HEK293 (cell line): ENCODE measurements at regions of chr7 and their contacts with region 1.

Region 1: GRCh38 chr7:150417863-150418262 is 32.6 kb upstream of the GIMAP8 start:
- H3K4me3 ChIP-seq: no peak overlapping the region
- H3K27ac ChIP-seq: no peak overlapping the region
- H3K4me1 ChIP-seq: no peaks in the 10 kb centered on the region
- CTCF ChIP-seq: no peak

Region 2: DNA sequence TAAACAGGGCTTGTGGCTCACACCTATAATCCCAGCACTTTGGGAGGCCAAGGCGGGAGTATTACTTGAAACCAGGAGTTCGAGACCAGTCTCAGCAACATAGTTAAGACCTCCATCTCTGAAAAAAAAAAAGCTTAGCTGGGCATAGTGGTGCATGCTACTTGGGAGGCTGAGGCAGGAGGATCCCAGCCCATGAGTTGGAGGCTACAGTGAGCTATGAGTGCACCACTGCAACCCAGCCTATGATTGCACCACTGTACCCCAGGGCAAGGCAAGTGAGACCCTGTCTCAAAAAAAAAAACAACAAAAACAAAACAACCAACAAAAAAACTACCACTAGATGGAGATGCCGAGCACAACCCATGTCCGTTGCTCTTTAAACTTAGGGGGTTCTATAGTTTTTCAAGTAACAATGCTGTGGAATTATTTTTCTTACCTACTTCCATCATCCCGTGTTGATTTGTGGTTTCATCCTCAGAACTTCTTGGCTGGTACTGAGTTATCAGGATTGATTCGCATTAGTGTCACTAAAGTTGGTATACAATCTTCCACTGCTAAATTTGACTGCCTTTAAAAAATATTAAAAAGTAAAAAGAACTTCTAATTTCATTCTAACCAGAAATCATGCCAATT is 61.5 kb before region 1 on chr7:
- CTCF ChIA-PET with region 1: interaction called, 10 read pairs
- POLR2A ChIA-PET with region 1: no interaction called
- H3K4me3 ChIP-seq: no peak overlapping the region
- H3K27ac ChIP-seq: no peak overlapping the region
- H3K4me1 ChIP-seq: no peaks in the 10 kb centered on the region
- CTCF ChIP-seq: peak; percentile 64